ENCODE measurements at regions of chr16 and their contacts with region 1.

Region 1: DNA sequence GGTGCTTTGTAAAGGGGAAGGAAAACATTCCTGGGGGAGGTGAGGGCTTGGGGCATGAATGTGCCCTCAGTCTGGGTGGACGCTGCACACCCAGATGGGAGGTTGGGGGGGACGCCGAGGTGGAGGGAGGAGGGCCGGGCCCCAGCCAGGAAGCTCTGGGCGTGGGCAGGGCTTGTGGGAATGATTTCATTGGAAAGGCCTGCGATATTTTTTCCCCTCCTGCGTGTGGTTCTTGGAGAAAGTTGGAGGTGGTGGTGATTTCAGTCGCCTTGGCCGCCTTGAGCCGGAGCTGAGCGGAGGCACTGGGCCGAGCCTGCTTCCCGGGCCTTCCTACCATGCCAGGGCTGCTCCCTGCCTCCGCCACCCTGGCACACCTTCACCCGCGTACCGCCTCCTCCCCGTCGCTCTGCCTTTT is 26.4 kb upstream of the CLEC18A start:
- DNase-seq: no peak
- ATAC-seq: peak in 1 of 2 donors; percentile 34
- H3K4me3 ChIP-seq: peak overlapping the region; percentile 14
- H3K27ac ChIP-seq: peak overlapping the region; percentile 56
- H3K4me1 ChIP-seq: no peaks in the 10 kb centered on the region
- H3K27me3 ChIP-seq: no peaks in the 10 kb centered on the region
- CTCF ChIP-seq: no peak

Region 2: DNA sequence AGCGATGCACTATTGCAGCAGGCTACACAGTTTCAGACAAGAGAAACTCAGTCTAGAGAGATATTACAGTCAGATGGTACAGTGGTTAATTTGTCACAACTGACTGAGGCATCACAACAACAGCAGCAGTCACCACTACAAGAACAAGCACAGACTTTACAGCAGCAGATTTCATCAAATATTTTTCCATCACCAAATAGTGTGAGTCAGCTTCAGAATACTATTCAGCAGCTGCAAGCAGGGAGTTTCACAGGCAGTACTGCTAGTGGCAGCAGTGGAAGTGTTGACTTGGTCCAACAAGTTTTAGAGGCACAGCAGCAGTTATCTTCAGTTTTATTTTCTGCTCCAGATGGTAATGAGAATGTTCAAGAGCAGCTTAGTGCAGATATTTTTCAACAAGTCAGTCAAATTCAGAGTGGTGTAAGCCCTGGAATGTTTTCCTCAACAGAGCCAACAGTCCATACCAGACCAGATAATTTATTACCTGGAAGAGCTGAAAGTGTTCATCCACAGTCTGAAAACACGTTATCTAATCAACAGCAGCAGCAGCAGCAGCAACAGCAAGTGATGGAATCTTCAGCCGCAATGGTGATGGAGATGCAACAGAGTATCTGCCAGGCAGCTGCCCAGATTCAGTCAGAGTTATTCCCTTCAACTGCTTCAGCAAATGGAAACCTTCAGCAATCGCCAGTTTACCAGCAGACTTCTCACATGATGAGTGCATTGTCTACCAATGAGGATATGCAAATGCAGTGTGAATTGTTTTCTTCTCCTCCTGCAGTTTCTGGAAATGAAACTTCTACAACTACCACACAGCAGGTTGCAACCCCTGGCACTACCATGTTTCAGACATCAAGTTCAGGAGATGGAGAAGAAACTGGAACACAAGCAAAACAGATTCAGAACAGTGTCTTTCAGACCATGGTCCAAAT is 232.5 kb before region 1 on chr16:
- intact Hi-C with region 1: no loop called
- DNase-seq: no peak
- ATAC-seq: no peak
- H3K4me3 ChIP-seq: no peak overlapping the region
- H3K27ac ChIP-seq: no peak overlapping the region
- H3K4me1 ChIP-seq: no peaks in the 10 kb centered on the region
- H3K27me3 ChIP-seq: no peaks in the 10 kb centered on the region
- CTCF ChIP-seq: no peak

Region 3: GRCh38 chr16:69796351-69797118 is 128.2 kb before region 1 on chr16:
- intact Hi-C with region 1: loop called (anchors 10 kb)
- DNase-seq: no peak
- ATAC-seq: peak; percentile 87 to 88
- H3K4me3 ChIP-seq: no peak overlapping the region
- H3K27ac ChIP-seq: no peak overlapping the region
- H3K4me1 ChIP-seq: peaks cover 7% of the 10 kb centered on the region
- H3K27me3 ChIP-seq: no peaks in the 10 kb centered on the region
- CTCF ChIP-seq: peak; percentile 90

Measured in lower lobe of right lung (tissue), 2 donors.